MCF 10A (cell line): ENCODE measurements at regions of chr19 and their contacts with region 1.

Region 1: DNA sequence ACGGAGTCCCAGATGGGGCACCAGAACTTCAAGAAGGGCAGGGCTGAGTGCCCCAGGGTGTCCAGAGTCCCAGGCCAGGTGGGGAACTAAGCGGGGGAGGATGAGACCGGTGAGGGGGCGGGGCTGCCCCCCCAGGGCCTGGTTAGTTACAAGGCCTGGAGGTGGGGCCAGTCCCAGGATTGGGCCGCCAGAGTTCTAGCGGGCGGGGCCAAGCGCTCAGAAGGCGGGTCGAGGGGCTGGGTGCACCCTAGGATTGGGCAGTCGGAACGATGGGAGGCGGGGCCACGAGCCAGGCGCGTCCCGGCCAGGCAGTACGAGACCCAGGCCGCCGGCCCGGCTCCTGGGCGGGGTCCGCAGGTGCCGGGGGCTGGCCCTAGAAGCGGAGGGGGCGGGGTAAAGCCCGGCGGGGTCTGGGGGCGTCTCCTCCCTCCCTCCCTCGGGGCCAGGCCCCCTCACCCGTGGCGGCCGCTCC is 571 bp downstream of the ZNF653 start:
- DNase-seq: peak; percentile 96
- H3K4me3 Mint-ChIP-seq: peak overlapping the region; percentile 81
- H3K27ac Mint-ChIP-seq: peak overlapping the region; percentile 85
- H3K4me1 Mint-ChIP-seq: peaks cover 20% of the 10 kb centered on the region
- H3K27me3 Mint-ChIP-seq: no peaks in the 10 kb centered on the region
- CTCF ChIP-seq: no peak

Region 2: GRCh38 chr19:11397089-11397610 is 107.9 kb before region 1 on chr19:
- CTCF ChIA-PET with region 1: no interaction called
- POLR2A ChIA-PET with region 1: no interaction called
- intact Hi-C with region 1: no loop called
- DNase-seq: no peak
- H3K4me3 Mint-ChIP-seq: no peak overlapping the region
- H3K27ac Mint-ChIP-seq: no peak overlapping the region
- H3K4me1 Mint-ChIP-seq: no peaks in the 10 kb centered on the region
- H3K27me3 Mint-ChIP-seq: no peaks in the 10 kb centered on the region
- CTCF ChIP-seq: no peak

Region 3: GRCh38 chr19:11446652-11447301 is 58.3 kb before region 1 on chr19:
- CTCF ChIA-PET with region 1: no interaction called
- POLR2A ChIA-PET with region 1: no interaction called
- intact Hi-C with region 1: no loop called
- DNase-seq: peak; percentile 47
- H3K4me3 Mint-ChIP-seq: no peak overlapping the region
- H3K27ac Mint-ChIP-seq: peak overlapping the region; percentile 8
- H3K4me1 Mint-ChIP-seq: no peaks in the 10 kb centered on the region
- H3K27me3 Mint-ChIP-seq: no peaks in the 10 kb centered on the region
- CTCF ChIP-seq: peak; percentile 80

Region 4: DNA sequence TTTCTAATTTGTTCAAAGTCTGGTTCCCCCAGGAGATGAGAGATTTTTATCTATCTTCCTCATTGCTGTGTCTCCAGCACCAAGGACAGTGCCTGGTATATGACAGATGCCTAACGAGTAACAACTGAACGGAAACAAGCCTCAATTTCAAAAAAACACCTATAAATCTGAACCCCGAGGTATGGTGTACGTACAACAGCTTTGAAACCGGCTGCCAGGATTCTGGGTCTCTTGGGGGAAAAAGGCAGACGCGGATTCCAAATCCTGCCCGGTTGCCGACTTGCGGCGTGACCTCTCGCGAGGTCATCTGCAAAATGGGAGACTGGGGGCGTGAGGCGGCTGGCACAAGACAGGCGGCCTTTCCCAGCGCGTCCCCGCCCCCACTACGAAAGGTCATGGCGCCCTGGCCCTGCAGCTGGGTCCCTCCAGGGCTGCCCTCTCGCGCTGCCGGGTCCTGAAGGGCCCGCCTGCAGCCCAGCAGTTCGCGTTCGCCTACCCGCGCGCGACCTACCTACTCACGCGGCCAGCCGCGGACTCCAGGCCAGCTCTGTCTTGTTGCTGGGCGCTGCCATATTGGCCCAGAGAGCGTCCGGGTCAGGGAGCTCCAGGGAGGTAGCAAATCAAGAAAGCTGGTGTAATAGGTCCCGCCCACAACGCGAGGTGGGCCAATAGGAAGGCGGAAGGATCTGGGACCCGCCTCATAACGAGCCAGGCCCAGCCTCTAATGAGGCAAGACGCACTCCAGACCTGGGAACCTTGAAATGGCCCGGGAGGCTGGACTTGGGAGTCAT is 23.7 kb after region 1 on chr19 and contains the start of gene ECSIT:
- CTCF ChIA-PET with region 1: no interaction called
- POLR2A ChIA-PET with region 1: interaction called, 4 read pairs
- intact Hi-C with region 1: loop called (anchors 1 kb)
- DNase-seq: peak; percentile 100
- H3K4me3 Mint-ChIP-seq: peak within 1 kb of the TSS; percentile 93
- H3K27ac Mint-ChIP-seq: peak within 1 kb of the TSS; percentile 90
- H3K4me1 Mint-ChIP-seq: peaks cover 8% of the 10 kb centered on the region
- H3K27me3 Mint-ChIP-seq: no peaks in the 10 kb centered on the region
- CTCF ChIP-seq: no peak
- total RNA-seq, gene ECSIT: 19.2 and 26.8 TPM in 2 replicates

Region 5: GRCh38 chr19:11541238-11541637 is 36.2 kb after region 1 on chr19:
- CTCF ChIA-PET with region 1: no interaction called
- POLR2A ChIA-PET with region 1: no interaction called
- intact Hi-C with region 1: no loop called
- DNase-seq: no peak
- H3K4me3 Mint-ChIP-seq: no peak overlapping the region
- H3K27ac Mint-ChIP-seq: no peak overlapping the region
- H3K4me1 Mint-ChIP-seq: peaks cover 9% of the 10 kb centered on the region
- H3K27me3 Mint-ChIP-seq: peaks cover 11% of the 10 kb centered on the region
- CTCF ChIP-seq: no peak

Region 6: DNA sequence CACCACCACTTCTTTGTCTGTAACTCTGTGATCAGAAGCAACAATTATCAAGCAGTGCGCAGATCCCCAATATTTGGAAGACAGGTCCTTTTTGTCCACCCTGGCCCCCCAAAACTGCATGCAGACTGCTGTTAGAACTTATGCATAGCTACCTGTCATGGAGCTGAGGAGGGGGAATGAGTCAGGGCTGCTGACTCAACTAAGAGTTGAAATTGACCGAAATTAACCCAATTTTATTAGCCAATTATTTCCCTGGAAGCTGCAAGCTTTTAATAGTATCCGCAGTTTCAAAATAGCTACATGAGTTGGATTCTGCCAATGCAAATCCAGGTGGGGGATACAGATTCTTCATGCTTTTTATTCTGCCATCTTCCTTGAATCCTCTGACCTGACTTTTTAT is 279.3 kb after region 1 on chr19:
- CTCF ChIA-PET with region 1: no interaction called
- POLR2A ChIA-PET with region 1: no interaction called
- intact Hi-C with region 1: no loop called
- DNase-seq: no peak
- H3K4me3 Mint-ChIP-seq: no peak overlapping the region
- H3K27ac Mint-ChIP-seq: no peak overlapping the region
- H3K4me1 Mint-ChIP-seq: no peaks in the 10 kb centered on the region
- H3K27me3 Mint-ChIP-seq: no peaks in the 10 kb centered on the region
- CTCF ChIP-seq: no peak